Prostate gland (tissue), 2 donors: ENCODE measurements at regions of chr3 and their contacts with region 1.

Region 1: GRCh38 chr3:58532794-58533220 is 4.2 kb downstream of the ACOX2 start:
- DNase-seq: peak; percentile 43
- H3K4me3 ChIP-seq: no peak overlapping the region
- H3K27ac ChIP-seq: no peak overlapping the region
- H3K4me1 ChIP-seq: no peaks in the 10 kb centered on the region
- H3K27me3 ChIP-seq: no peaks in the 10 kb centered on the region
- CTCF ChIP-seq: peak; percentile 86 to 96 (median 92)
- POLR2A ChIP-seq: no peak

Region 2: DNA sequence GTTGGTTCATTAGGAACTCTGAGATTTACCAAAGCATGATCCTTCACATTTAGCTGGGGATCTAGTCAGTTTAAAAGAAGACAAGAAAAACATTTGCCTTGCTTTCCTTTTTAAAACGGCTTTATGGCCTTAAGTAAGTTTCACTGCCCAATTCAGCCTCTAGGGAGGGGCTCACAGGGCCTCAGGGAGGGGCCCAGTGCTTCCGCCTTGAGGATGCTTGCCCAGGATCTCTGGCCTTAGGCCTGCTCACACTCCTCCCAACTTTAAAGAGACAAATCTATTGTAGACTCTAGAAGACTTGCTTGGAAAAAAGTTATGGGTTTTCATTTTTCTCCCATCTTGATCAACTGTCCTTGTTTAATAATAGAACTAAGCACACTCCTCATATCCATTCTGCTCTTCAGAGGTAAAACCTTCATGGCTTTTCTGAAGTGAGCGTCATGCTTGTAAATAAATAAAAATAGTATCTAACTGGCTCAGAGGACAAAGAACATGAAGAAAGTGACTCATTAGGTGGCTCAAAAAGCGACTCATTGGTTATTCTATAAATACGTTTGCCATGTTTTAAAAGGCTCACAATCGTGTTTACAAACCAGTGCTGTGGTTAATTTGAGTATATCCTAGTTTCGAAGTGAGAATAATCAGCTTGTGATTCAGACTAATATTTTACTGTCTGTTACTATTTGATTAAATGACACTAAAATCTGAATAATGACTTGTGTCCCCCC is 112.9 kb before region 1 on chr3:
- intact Hi-C with region 1: loop called (anchors 5 kb)
- DNase-seq: no peak
- H3K4me3 ChIP-seq: no peak overlapping the region
- H3K27ac ChIP-seq: peak overlapping the region; percentile 2 to 32
- H3K4me1 ChIP-seq: no peaks in the 10 kb centered on the region
- H3K27me3 ChIP-seq: no peaks in the 10 kb centered on the region
- CTCF ChIP-seq: no peak
- POLR2A ChIP-seq: no peak

Region 3: GRCh38 chr3:58474348-58474911 is 58.4 kb before region 1 on chr3:
- intact Hi-C with region 1: no loop called
- DNase-seq: no peak
- H3K4me3 ChIP-seq: no peak overlapping the region
- H3K27ac ChIP-seq: no peak overlapping the region
- H3K4me1 ChIP-seq: no peaks in the 10 kb centered on the region
- H3K27me3 ChIP-seq: no peaks in the 10 kb centered on the region
- CTCF ChIP-seq: no peak
- POLR2A ChIP-seq: no peak